Right ventricle myocardium inferior (tissue), 1 donor: ENCODE measurements at regions of chr12 and their contacts with region 1.

Region 1: GRCh38 chr12:26853303-26854030 is 20.5 kb upstream of the ITPR2 start:
- DNase-seq: peak; percentile 80
- ATAC-seq: peak; percentile 80

Region 2: DNA sequence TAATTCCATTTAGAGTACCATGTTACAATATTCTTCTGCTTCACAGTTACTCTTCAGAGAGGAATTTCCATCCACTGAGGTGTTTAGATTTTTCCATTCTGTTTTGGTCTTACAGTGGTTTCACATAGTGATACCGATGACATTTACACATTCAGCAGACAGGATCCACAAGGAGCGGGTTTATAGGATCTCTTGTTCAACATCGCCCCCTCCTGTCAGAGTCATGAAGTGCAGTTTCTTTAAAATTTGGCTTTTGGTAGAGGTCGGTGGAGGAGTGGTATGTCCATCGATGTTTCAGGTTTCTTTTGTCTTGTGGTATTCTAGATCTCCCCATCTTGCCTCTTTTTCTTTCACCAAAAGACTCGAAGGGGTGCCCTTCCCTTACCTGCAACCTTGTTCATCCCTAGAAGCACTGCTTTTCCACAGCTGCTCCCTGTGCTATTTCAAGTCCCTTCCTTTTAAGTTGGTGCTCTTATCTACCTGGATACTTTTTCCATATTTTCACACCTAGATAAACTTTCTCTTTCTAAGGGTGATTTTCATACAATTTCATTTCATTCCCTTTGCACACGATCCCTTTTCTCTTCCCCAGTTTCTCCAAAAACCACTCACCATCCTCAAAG is 201.8 kb before region 1 on chr12:
- intact Hi-C with region 1: no loop called
- DNase-seq: no peak
- ATAC-seq: peak; percentile 50

Region 3: GRCh38 chr12:26701604-26702215 is 151.8 kb before region 1 on chr12:
- intact Hi-C with region 1: no loop called
- DNase-seq: no peak
- ATAC-seq: no peak

Region 4: DNA sequence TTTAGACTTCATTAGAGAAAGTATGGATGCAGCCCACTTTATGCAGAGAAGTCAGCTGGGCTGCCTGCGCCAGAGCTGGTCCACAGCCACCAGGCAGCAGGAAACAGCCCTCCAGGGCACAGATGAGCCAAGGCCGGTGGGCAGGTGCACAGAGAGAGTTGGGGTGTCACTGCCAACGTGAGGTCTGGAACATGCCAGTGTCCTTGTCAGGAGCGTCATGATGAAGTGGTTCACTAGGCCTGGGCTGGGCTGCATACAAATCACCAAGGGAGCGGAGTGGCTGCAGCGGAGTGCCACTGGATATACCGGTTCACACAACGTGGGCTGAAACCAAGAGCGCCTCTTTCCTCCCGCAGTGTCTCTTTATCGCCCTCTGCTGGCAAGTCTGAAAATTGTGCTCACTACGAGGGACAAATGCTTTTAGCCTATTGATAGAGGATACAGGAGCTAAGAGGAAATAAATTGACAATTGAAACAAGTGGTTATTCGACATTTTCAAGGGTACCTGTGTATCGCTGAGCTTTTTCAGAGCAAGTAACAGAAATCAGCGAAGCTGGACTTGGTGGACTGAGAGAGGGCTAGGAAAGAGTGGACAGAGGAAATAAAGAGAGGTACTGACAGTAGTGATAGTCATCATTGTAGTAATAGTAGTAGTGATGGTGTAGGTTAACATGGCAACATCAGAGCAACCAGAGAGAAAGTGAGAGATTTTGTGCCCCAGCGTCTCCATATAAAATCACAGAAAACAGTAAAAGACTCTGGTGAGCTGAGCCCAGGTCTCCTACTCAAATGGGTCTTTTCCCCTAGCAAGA is 31.5 kb after region 1 on chr12:
- intact Hi-C with region 1: loop called (anchors 1 kb)
- DNase-seq: peak; percentile 88
- ATAC-seq: peak; percentile 94